Activated B cell treated with CpG ODN at 0.5 μM for 24 hours (primary cell): ENCODE measurements at regions of chr3 and their contacts with region 1.

Region 1: DNA sequence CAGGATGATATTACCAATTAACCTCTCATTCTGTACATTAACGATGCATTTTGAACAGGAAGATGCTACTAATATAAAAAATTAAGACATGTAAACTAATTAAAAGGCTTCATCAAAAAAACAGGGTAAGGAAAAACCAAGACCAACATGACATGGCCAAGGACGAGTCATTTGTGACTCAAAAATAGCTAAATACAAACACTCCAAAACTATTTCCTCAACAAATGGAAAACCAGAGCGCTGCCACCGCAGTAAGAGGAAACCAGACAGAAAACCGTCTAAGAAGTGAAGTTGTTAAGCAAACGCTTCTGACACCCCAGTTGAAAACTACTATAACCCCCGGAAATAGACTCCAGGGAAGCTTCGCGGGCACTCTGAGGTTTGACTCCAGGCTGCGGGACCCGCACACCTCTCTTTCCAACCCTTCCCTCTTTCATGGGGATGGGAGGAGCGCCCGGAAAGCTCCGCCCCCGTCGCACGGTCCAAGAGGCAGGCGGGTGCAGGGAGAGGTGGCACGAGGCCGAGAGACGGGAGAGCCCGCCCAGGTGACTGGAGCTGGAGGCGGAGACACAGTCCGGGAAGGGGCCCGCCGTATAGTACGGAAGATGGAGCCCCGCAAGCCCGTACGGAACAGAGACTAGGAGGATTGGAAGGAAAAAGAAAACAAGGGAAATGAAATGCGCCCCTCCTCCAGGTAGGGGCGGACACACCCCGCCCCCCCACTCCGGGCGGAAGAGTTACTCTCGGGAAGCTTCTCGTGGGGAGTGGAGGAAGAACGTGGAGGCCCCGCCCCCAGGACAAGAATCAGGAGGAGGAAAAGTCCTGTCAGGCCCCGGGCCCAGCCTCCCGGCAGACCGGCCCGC is 708 bp downstream of the DCAF1 start:
- DNase-seq: peak; percentile 77
- ATAC-seq: peak; percentile 40
- H3K4me3 Mint-ChIP-seq: peak overlapping the region; percentile 89
- H3K27ac Mint-ChIP-seq: peak overlapping the region; percentile 95
- H3K4me1 Mint-ChIP-seq: peaks cover 22% of the 10 kb centered on the region
- H3K27me3 Mint-ChIP-seq: no peaks in the 10 kb centered on the region
- CTCF ChIP-seq: no peak

Region 2: GRCh38 chr3:50358911-50359759 is 1140.0 kb before region 1 on chr3 and contains the start of gene TMEM115:
- CTCF ChIA-PET with region 1: no interaction called
- POLR2A ChIA-PET with region 1: no interaction called
- intact Hi-C with region 1: loop called (anchors 1 kb)
- DNase-seq: peak; percentile 88
- ATAC-seq: peak; percentile 100
- H3K4me3 Mint-ChIP-seq: peak within 1 kb of the TSS; percentile 96
- H3K27ac Mint-ChIP-seq: peak within 1 kb of the TSS; percentile 89
- H3K4me1 Mint-ChIP-seq: peaks cover 49% of the 10 kb centered on the region
- H3K27me3 Mint-ChIP-seq: no peaks in the 10 kb centered on the region
- CTCF ChIP-seq: no peak
- total RNA-seq, gene TMEM115: 18.7 and 19.6 TPM in 2 replicates

Region 3: GRCh38 chr3:51384726-51385473 is 114.2 kb before region 1 on chr3 and contains the start of gene MANF:
- CTCF ChIA-PET with region 1: interaction called, 5 read pairs
- POLR2A ChIA-PET with region 1: interaction called, 31 read pairs
- intact Hi-C with region 1: loop called (anchors 1 kb)
- DNase-seq: peak; percentile 89
- ATAC-seq: peak; percentile 95
- H3K4me3 Mint-ChIP-seq: peak within 1 kb of the TSS; percentile 99
- H3K27ac Mint-ChIP-seq: peak within 1 kb of the TSS; percentile 98
- H3K4me1 Mint-ChIP-seq: peaks cover 49% of the 10 kb centered on the region
- H3K27me3 Mint-ChIP-seq: no peaks in the 10 kb centered on the region
- CTCF ChIP-seq: no peak
- total RNA-seq, gene MANF: 64.2 and 66.1 TPM in 2 replicates

Region 4: GRCh38 chr3:51519848-51520247 is 20.7 kb after region 1 on chr3:
- CTCF ChIA-PET with region 1: interaction called, 8 read pairs
- POLR2A ChIA-PET with region 1: interaction called, 48 read pairs
- intact Hi-C with region 1: loop called (anchors 1 kb)
- DNase-seq: no peak
- ATAC-seq: no peak
- H3K4me3 Mint-ChIP-seq: no peak overlapping the region
- H3K27ac Mint-ChIP-seq: peak overlapping the region; percentile 41
- H3K4me1 Mint-ChIP-seq: peaks cover 27% of the 10 kb centered on the region
- H3K27me3 Mint-ChIP-seq: no peaks in the 10 kb centered on the region
- CTCF ChIP-seq: no peak

Region 5: DNA sequence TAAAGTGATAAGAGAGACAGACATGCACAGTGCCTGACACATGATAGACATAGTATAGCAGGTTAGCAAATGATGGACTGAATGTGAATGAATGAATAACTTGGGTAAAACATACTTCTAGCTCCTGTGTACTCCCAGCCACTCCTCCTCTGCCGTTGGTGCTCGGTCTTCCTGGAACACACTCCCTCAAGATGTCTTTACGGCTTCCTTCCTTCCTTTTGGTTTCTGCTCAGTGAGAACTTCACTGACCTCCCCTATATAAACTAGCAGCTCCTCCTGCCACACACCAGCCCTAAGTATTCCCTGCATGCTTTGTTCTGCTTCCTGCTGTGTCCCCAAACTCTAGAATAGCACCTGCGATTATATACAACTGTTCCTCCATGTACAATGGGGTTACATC is 89.6 kb after region 1 on chr3:
- CTCF ChIA-PET with region 1: interaction called, 3 read pairs
- POLR2A ChIA-PET with region 1: interaction called, 10 read pairs
- intact Hi-C with region 1: no loop called
- DNase-seq: no peak
- ATAC-seq: no peak
- H3K4me3 Mint-ChIP-seq: no peak overlapping the region
- H3K27ac Mint-ChIP-seq: peak overlapping the region; percentile 30
- H3K4me1 Mint-ChIP-seq: peaks cover 7% of the 10 kb centered on the region
- H3K27me3 Mint-ChIP-seq: no peaks in the 10 kb centered on the region
- CTCF ChIP-seq: no peak

Region 6: DNA sequence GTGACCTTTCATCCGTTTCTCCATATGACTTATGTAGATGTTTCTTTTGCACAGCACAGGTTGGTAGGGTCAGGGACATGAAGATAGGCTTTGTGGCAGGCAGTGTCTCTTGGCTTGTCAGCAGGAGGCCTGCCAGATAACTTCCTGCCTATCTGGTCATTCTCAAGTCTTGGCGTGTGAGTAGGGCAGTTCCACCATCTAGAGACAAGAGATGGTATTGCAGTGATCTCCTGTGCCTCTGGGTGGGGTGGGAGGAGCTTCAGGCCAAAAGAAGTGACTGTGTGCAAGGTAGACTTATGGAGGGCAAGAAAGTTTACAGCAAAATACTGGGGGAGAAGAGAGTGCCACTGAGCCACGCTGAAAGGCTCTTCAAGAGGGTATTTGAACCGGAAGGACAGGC is 183.0 kb after region 1 on chr3:
- CTCF ChIA-PET with region 1: interaction called, 114 read pairs
- POLR2A ChIA-PET with region 1: interaction called, 26 read pairs
- intact Hi-C with region 1: loop called (anchors 1 kb)
- DNase-seq: peak; percentile 40
- ATAC-seq: peak; percentile 87
- H3K4me3 Mint-ChIP-seq: peak overlapping the region; percentile 12
- H3K27ac Mint-ChIP-seq: peak overlapping the region; percentile 73
- H3K4me1 Mint-ChIP-seq: peaks cover 82% of the 10 kb centered on the region
- H3K27me3 Mint-ChIP-seq: no peaks in the 10 kb centered on the region
- CTCF ChIP-seq: no peak

Region 7: DNA sequence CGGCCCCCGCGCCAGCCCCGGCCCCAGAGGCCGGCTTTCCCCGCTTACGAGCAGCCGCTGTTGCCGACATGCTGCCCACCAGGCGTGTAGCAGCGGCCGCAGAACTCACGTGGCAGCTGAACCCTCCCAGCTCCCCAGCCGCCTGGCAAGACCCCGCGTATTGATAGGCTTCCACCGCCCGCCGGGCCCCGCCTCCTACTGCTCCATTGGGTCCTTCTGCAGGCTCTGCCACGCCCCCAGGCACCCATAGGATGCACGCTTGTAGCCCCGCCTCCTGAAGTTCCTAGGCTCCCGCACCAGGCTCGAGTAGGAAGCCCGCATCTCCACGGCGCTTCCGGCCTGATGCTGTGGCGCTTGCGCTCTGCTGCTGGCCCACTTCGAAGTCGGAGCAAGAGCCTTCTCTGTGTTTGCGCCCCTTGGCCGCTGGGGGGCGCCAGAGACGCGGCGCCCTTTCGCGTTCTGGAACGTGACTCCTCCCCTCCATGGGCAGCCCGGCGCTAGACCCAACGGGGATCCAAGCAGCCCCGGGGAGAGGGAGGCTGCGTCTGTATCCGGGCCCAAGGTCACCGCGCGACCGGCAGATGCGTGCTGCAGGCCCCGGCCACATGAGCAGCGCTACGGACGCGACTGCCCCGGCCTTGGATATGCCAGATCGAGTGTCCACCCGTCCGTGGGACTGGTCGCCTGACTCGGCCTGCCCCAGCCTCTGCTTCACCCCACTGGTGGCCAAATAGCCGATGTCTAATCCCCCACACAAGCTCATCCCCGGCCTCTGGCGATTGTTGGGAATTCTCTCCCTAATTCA is 442.9 kb after region 1 on chr3 and contains the starts of genes PARP3 and RRP9:
- CTCF ChIA-PET with region 1: no interaction called
- POLR2A ChIA-PET with region 1: interaction called, 11 read pairs
- intact Hi-C with region 1: no loop called
- DNase-seq: peak; percentile 96
- ATAC-seq: peak; percentile 94
- H3K4me3 Mint-ChIP-seq: peak within 1 kb of the TSS; percentile 90
- H3K27ac Mint-ChIP-seq: peak within 1 kb of the TSS; percentile 77
- H3K4me1 Mint-ChIP-seq: peaks cover 38% of the 10 kb centered on the region
- H3K27me3 Mint-ChIP-seq: no peaks in the 10 kb centered on the region
- CTCF ChIP-seq: peak; percentile 34
- total RNA-seq, gene PARP3: 9.7 and 12.7 TPM in 2 replicates
- total RNA-seq, gene RRP9: 30.7 and 32.4 TPM in 2 replicates